Activated B cell treated with CpG ODN at 0.5 μM for 24 hours (primary cell): ENCODE measurements at regions of chr22 and their contacts with region 1.

Region 1: DNA sequence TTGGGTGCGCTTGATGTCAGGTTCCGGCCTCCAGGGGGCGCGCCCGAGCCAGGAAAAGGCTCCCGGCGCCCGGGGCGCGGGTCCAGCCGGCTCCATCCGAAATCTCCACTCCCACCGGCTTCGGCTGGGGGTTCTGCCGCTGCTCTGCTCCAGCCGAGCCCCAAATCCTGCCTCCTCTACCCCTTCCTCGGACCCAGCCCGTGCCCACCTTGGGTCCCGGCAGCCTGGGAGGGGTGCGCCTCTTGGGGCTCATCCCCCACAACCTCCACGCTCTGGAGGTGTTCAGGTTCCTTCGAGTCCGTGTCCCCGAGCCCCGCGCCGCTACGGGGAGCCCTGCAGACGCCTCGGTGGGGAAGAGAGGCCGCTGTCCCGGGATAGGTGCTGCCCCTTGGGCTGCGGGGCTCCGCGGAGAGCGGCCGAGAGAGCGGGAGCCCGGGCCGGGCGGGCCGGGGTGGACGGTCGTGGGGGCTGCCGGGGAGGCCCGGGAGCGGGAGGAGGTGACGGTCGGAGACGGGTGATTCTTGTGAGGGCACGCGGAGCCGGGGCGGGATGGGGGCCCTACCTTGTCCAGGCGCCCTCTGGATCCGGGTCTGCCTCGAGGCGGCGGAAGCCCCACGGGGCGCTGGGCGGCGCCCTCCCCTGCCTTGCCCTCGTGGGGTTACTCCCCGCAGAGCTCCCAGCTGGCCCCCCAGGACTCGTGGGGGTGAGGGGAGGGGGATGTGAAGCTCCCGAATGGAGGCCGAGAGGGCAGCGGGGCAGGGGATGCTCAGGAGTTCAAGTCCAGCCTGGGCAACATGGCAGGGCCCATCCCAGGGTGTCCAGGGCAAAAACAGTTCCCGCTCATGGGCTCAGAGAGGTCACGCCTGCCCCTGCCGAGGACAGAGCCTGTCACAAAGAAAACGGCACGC is 13.2 kb upstream of the CYB5R3 start:
- DNase-seq: peak; percentile 83
- ATAC-seq: peak; percentile 33
- H3K4me3 Mint-ChIP-seq: peak overlapping the region; percentile 77
- H3K27ac Mint-ChIP-seq: peak overlapping the region; percentile 53
- H3K4me1 Mint-ChIP-seq: peaks cover 46% of the 10 kb centered on the region
- H3K27me3 Mint-ChIP-seq: no peaks in the 10 kb centered on the region
- CTCF ChIP-seq: peak; percentile 75

Region 2: DNA sequence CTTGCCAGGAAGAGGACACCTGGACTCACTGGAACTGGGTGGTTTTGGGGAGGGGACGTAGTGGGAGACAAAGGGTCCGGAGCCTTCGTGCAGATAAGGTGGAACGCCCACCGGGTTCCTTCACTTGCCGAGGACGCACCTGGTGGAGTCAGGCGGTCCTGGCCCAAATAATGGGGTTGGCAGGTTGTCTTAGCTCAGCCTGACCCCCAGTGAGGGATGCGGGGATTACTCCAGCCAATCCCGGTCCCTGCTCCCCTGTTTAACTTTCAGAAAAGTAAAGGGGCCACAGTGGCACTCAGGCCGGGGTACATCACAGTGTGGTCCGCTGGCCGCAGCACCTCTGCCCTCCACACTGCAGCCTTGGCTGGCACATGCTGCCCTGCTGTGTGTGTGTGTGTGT is 40.3 kb after region 1 on chr22:
- CTCF ChIA-PET with region 1: no interaction called
- POLR2A ChIA-PET with region 1: no interaction called
- intact Hi-C with region 1: no loop called
- DNase-seq: no peak
- ATAC-seq: no peak
- H3K4me3 Mint-ChIP-seq: no peak overlapping the region
- H3K27ac Mint-ChIP-seq: no peak overlapping the region
- H3K4me1 Mint-ChIP-seq: peaks cover 3% of the 10 kb centered on the region
- H3K27me3 Mint-ChIP-seq: no peaks in the 10 kb centered on the region
- CTCF ChIP-seq: no peak

Region 3: DNA sequence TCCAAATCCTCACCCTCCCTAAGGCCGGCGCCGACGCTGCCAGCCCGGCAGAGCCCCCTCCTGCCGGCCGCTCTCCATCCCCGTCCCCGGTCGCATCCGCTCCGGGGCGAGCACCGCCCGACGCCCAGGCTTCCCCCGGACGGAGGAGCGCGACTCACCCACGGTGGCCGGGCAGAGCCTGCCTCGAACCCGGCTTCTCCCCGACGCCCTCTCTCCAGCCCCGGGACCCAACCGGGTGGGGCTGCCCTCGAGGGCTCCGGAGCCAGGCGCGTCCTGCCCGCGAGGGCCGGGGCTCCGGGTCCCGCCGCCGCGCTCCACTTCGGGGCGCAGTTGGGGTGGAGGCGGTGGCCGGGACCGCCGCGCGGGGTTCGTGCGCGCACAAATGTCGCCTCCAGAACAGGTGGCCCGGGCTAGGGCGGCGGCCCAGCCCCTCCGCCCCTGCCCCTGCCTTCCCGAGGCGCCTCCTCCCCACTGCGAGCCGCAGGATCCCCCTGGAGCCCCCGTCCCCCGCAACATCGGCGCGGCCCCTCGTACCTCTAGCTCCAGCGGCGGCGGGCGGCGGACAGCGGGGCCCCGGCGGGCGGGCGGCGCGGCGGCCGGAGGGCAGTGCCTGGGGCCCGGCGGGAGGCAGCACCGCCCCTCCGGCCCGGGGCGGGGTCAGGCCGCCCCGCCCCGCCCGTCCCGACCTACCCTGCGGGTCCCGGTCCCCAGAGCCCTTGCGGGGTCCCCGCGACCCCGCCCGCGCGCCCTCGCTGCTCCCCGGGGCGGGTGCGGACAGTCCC is 58.1 kb after region 1 on chr22 and contains the start of gene A4GALT:
- CTCF ChIA-PET with region 1: no interaction called
- POLR2A ChIA-PET with region 1: interaction called, 4 read pairs
- intact Hi-C with region 1: loop called (anchors 2 kb)
- DNase-seq: peak; percentile 35
- ATAC-seq: peak; percentile 41
- H3K4me3 Mint-ChIP-seq: peak within 1 kb of the TSS; percentile 80
- H3K27ac Mint-ChIP-seq: no peak within 1 kb of the TSS
- H3K4me1 Mint-ChIP-seq: peaks cover 48% of the 10 kb centered on the region
- H3K27me3 Mint-ChIP-seq: peaks cover 30% of the 10 kb centered on the region
- CTCF ChIP-seq: no peak
- total RNA-seq, gene A4GALT: 16.9 and 18.4 TPM in 2 replicates

Region 4: GRCh38 chr22:42769574-42770447 is 107.4 kb after region 1 on chr22:
- CTCF ChIA-PET with region 1: no interaction called
- POLR2A ChIA-PET with region 1: interaction called, 13 read pairs
- intact Hi-C with region 1: loop called (anchors 2 kb)
- DNase-seq: peak; percentile 62
- ATAC-seq: peak; percentile 91
- H3K4me3 Mint-ChIP-seq: peak overlapping the region; percentile 77
- H3K27ac Mint-ChIP-seq: peak overlapping the region; percentile 70
- H3K4me1 Mint-ChIP-seq: peaks cover 63% of the 10 kb centered on the region
- H3K27me3 Mint-ChIP-seq: no peaks in the 10 kb centered on the region
- CTCF ChIP-seq: no peak

Region 5: DNA sequence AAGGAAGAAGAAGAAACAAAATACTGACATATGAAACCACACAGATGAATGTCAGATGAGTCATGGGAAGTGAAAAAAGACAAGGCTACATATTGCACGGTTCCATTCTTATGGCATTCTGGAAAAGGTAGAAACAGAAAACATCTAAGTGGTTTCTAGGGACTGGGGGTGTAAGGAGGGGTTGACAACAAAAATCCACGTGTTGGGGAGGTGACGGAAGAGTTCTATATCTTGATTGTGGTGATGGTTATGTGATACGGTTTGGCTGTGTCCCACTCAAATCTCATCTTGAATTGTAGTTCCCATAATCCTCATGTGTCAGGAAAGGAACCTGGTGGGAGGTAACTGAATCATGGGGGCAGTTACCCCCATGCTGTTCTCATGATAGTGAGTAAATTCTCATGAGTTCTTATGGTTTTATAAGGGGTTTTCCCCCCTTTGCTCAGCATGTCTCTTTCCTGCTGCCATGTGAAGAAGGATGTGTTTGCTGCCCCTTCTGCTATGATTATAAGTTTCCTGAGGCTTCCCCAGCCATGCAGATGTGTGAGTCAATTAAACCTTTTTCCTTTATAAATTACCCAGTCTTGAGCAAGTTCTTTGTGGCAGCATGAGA is 201.1 kb after region 1 on chr22:
- CTCF ChIA-PET with region 1: interaction called, 10 read pairs
- POLR2A ChIA-PET with region 1: interaction called, 8 read pairs
- intact Hi-C with region 1: loop called (anchors 1 kb)
- DNase-seq: no peak
- ATAC-seq: peak; percentile 60
- H3K4me3 Mint-ChIP-seq: peak overlapping the region; percentile 64
- H3K27ac Mint-ChIP-seq: peak overlapping the region; percentile 96
- H3K4me1 Mint-ChIP-seq: peaks cover 45% of the 10 kb centered on the region
- H3K27me3 Mint-ChIP-seq: no peaks in the 10 kb centered on the region
- CTCF ChIP-seq: no peak

Region 6: DNA sequence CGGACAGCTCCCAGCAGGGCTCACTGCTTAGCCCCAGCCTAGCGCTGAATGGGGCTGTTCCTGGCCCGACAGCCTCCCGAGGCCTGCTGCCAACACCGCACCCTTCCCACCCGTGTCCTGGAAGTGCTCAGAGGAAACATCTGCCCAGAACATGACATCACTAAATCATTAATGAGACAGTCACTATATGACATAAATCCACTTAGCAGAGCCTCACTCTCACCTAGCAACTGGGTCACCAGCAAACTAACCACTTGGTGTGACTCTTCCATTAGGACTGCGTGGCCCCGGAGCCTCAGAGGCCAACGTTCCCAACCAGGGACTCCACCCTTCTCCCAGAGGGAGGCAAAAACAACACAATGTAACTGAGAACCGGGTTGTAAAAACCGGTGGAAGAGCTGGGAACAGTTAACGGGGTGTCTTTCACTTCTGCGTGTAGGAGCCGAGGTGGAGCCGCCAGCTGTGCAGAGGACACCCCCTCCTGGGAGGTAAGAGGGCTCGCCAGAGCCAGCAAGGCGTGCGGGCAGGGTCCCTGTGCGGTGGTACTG is 374.0 kb after region 1 on chr22:
- CTCF ChIA-PET with region 1: interaction called, 3 read pairs
- POLR2A ChIA-PET with region 1: no interaction called
- intact Hi-C with region 1: loop called (anchors 5 kb)
- DNase-seq: no peak
- ATAC-seq: no peak
- H3K4me3 Mint-ChIP-seq: no peak overlapping the region
- H3K27ac Mint-ChIP-seq: no peak overlapping the region
- H3K4me1 Mint-ChIP-seq: peaks cover 2% of the 10 kb centered on the region
- H3K27me3 Mint-ChIP-seq: no peaks in the 10 kb centered on the region
- CTCF ChIP-seq: no peak

Region 7: DNA sequence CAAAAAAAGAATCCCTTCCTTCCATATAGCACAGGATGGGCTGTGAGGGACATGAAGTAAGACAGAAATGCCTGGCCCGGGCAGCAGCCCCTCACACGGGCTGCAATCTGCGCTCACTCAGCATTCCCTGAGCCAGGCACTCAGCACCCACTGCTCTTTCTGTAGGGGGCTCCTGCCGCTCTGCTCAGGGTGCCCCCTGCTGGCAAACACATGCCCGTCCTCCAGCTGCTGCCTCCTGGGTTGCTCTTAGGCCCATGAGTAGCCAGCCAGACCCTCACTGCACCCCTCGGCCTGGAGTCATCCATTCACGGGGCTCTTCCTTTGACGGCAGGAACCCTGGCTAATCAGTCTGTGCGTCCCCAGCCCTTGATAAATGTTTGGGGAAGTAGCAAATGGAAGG is 473.9 kb after region 1 on chr22:
- CTCF ChIA-PET with region 1: no interaction called
- POLR2A ChIA-PET with region 1: interaction called, 5 read pairs
- intact Hi-C with region 1: loop called (anchors 5 kb)
- DNase-seq: peak; percentile 54
- ATAC-seq: peak; percentile 94
- H3K4me3 Mint-ChIP-seq: no peak overlapping the region
- H3K27ac Mint-ChIP-seq: no peak overlapping the region
- H3K4me1 Mint-ChIP-seq: peaks cover 7% of the 10 kb centered on the region
- H3K27me3 Mint-ChIP-seq: no peaks in the 10 kb centered on the region
- CTCF ChIP-seq: no peak